ENCODE measurements at regions of chr9 and their contacts with region 1.

Region 1: GRCh38 chr9:82117026-82117811 is 128.6 kb downstream of the SPATA31D1 start:
- DNase-seq: no peak
- H3K4me3 ChIP-seq: no peak overlapping the region
- H3K27ac ChIP-seq: no peak overlapping the region
- H3K4me1 ChIP-seq: peaks cover 26% of the 10 kb centered on the region
- CTCF ChIP-seq: no peak

Region 2: DNA sequence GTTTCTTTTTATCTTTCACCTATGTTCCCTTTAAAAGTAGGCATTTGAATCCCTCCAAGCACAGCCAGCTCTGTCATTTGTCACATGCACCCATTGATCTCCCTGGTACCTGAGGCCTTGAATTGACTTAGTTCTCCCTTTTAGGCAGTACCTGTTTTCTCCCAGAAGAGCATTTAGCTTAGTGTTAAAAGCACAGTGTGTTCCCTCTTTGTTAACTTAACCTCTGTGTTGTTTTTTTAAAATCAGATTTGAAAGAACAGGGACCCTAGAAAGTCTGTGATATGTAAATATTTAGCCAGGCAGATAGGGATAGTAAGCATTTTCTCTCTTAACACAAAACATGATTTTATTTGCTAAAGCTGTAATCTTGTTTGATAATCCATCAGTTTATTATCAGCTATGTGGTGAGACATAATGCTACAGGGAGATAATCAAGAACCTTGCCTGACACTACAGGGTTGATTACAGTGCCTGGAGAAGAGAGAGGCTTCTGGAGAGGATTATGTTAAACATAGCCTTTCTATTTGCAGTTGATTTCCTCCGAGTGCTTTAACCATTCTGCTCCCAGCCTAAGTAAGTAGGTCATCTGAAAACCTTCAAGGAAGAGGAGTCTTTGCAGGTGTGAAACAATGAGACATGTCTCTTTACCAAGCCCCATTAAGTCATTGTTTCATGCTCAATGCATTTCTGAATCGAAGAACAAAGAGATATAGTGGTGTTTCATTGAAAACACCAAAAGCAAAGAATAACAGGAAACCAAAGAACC is 302.6 kb before region 1 on chr9:
- CTCF ChIA-PET with region 1: no interaction called
- POLR2A ChIA-PET with region 1: no interaction called
- intact Hi-C with region 1: no loop called
- DNase-seq: peak; percentile 52
- H3K4me3 ChIP-seq: no peak overlapping the region
- H3K27ac ChIP-seq: peak overlapping the region; percentile 16
- H3K4me1 ChIP-seq: peaks cover 18% of the 10 kb centered on the region
- CTCF ChIP-seq: no peak

Region 3: DNA sequence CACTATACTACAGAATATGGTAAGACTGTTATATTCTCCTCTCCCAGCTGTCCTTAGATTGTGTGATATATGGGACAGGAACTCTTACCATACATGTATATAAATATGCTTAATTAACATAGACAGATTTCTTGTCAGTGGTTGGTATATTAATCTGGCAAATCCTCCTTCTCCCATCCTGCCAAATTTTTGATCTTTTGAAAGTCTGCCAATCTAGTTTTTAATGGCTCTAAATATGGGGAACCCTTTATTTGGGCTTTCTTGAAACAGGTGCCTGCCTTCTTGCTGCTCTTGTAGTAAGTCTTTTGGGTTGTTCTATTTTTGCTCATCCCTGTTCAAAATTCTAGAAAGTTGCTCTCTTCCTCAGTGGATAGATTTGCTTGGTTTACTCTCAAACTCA is 65.1 kb before region 1 on chr9:
- CTCF ChIA-PET with region 1: no interaction called
- POLR2A ChIA-PET with region 1: no interaction called
- intact Hi-C with region 1: no loop called
- DNase-seq: no peak
- H3K4me3 ChIP-seq: no peak overlapping the region
- H3K27ac ChIP-seq: no peak overlapping the region
- H3K4me1 ChIP-seq: no peaks in the 10 kb centered on the region
- CTCF ChIP-seq: no peak

Region 4: GRCh38 chr9:82106536-82106935 is 10.7 kb before region 1 on chr9:
- CTCF ChIA-PET with region 1: interaction called, 4 read pairs
- POLR2A ChIA-PET with region 1: interaction called, 32 read pairs
- intact Hi-C with region 1: no loop called
- DNase-seq: no peak
- H3K4me3 ChIP-seq: no peak overlapping the region
- H3K27ac ChIP-seq: no peak overlapping the region
- H3K4me1 ChIP-seq: peaks cover 26% of the 10 kb centered on the region
- CTCF ChIP-seq: no peak

Measured in OCI-LY7 (cell line).